Aorta (tissue), 5 donors: ENCODE measurements at regions of chr1 and their contacts with region 1.

Region 1: GRCh38 chr1:197902454-197903195 is at the start of gene C1orf53:
- DNase-seq: peak; percentile 88 to 94
- ATAC-seq: peak; percentile 99
- H3K4me3 ChIP-seq: peak within 1 kb of the TSS; percentile 61 to 84
- H3K27ac ChIP-seq: peak within 1 kb of the TSS in 1 of 2 donors; percentile 2
- H3K4me1 ChIP-seq: no peaks in the 10 kb centered on the region
- H3K27me3 ChIP-seq: peaks cover 0 to 1% of the 10 kb centered on the region in 2 donors
- total RNA-seq, gene C1orf53: 0.81 TPM in 1 of 2 donors, not detected in the other

Region 2: DNA sequence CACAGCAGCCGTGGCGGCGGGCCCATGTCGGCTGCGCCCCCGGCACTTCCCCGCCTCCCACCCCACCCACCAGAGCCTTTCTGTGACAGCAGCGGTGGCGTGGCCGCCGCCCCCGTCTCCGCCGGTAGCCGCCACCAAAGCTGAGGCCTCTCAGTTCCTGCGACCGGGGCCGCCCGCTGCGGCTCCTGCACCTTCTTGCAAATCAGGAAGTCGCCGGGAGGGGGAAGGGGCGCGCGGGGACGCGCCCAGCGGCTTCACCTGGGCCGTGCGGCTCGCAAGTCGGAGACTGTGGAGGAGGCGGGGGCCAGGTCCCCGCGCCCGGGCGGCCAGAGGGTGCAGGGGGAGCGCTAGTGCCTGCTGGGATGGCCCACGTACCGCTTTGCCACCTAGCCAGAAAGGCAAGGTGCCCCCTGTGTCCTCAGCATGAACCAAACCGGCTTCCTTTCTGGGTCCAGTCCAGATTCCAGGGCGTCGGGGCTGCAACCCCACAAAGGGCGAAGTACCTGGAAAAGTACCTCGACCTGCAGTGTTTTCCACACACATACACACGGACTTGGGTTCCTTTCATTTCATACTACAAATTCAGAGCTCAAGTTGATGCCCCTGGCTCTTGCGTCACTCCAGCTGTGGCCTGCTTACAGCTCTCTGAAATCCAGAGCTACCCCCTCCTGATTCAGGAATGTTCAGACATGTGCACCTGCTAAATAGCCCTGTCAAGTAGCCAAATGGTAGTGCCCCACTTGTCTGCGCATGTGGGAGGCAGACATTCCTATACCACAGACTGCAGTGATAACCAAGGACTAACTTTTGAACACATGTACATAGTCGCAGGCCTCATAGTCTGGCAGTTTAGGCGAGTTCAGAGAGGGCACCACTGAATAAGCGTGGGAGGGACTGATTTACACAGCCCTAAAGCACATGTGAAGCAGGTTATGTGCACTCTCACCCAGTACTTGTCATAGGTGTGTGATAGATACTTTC is 127.1 kb before region 1 on chr1 and contains the start of gene DENND1B:
- intact Hi-C with region 1: loop called in 1 of 2 experiments (anchors 5 kb)
- DNase-seq: peak; percentile 87 to 90
- ATAC-seq: peak; percentile 84
- H3K4me3 ChIP-seq: peak within 1 kb of the TSS; percentile 69 to 96
- H3K27ac ChIP-seq: peak within 1 kb of the TSS; percentile 68 to 83
- H3K4me1 ChIP-seq: no peaks in the 10 kb centered on the region
- H3K27me3 ChIP-seq: no peaks in the 10 kb centered on the region
- total RNA-seq, gene DENND1B: 13.9 to 20.5 TPM

Region 3: DNA sequence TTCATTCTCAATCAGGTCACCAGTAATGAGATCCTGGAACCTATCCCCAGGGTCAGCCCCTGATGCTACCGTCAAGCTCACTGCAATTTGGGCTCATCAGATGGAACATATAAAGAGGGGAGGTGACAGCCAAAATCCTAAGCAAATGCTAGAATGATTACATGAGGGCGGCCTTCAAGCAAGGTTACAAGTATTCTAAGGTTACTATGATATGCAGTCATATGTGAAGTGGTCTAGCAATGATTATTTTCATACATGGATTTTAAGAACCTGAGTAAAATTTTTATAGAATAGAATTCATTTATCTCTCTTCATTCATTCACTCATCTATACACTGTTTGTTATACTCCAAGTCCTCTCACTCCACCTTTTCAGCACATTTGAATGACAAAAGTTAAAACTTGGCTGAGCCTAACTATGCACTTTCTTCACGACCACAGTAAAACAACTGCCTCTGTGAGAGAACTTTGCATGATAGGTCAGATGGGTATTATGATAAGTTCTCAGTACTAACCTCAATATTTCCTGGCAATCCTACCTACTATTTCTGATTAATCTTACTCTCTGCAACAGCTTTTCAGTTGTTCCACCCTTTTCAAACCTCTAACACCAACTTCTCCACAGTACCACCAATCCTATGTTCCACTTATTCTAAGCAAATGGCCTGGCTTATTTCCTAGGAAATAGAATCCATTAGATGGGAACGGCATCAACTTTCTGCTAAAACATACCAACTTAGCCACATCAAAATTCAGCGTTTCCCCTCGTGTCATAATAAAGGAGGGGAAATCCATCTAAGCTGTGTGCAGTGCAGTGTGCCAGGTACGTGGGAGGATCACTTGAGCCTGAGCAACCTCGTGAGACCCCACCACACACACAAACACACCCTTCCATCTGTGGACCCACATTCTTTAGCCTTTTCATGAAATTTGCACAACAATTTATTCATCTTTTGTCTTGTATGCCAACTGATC is 46.6 kb after region 1 on chr1:
- intact Hi-C with region 1: no loop called
- DNase-seq: no peak
- ATAC-seq: no peak
- H3K4me3 ChIP-seq: no peak overlapping the region
- H3K27ac ChIP-seq: no peak overlapping the region
- H3K4me1 ChIP-seq: no peaks in the 10 kb centered on the region
- H3K27me3 ChIP-seq: no peaks in the 10 kb centered on the region

Region 4: GRCh38 chr1:197967063-197967462 is 64.4 kb after region 1 on chr1:
- intact Hi-C with region 1: no loop called
- DNase-seq: no peak
- ATAC-seq: no peak
- H3K4me3 ChIP-seq: no peak overlapping the region
- H3K27ac ChIP-seq: no peak overlapping the region
- H3K4me1 ChIP-seq: no peaks in the 10 kb centered on the region
- H3K27me3 ChIP-seq: peaks cover 0 to 3% of the 10 kb centered on the region in 2 donors